Naive thymus-derived CD4-positive, alpha-beta T cell (primary cell): ENCODE measurements at regions of chr2 and their contacts with region 1.

Region 1: DNA sequence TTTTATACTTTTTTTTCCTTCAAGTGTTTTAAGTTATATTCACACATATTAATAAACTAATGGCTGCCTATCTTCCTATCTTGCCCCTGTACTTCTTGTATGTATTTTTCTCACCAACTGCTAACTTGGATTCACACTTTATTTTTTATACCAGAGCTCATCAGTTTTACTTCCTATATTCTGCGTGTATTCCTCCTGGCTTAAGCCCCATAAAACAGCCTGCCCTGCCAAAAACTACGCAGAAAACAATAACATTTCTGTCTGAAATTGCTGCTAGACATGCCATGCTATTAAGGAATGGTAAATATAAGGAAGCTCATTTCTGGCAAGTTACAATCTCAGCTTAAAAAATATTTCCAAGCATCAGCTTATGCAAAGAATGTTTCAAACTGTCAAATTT is 172.3 kb downstream of the UBE2E3 start:
- DNase-seq: no peak
- ATAC-seq: no peak
- H3K4me3 ChIP-seq: no peak overlapping the region
- H3K4me3 Mint-ChIP-seq: peak overlapping the region in 5 of 10 donors; percentile 10 to 75 (median 16)
- H3K27ac ChIP-seq: peak overlapping the region; percentile 26
- H3K27ac Mint-ChIP-seq: peak overlapping the region in 8 of 9 donors; percentile 8 to 90 (median 55)
- H3K4me1 ChIP-seq: peaks cover 20 to 22% of the 10 kb centered on the region in 2 donors
- H3K4me1 Mint-ChIP-seq: peaks cover 18 to 54% (median 48%) of the 10 kb centered on the region in 7 donors
- H3K27me3 ChIP-seq: no peaks in the 10 kb centered on the region
- H3K27me3 Mint-ChIP-seq: no peaks in the 10 kb centered on the region

Region 2: DNA sequence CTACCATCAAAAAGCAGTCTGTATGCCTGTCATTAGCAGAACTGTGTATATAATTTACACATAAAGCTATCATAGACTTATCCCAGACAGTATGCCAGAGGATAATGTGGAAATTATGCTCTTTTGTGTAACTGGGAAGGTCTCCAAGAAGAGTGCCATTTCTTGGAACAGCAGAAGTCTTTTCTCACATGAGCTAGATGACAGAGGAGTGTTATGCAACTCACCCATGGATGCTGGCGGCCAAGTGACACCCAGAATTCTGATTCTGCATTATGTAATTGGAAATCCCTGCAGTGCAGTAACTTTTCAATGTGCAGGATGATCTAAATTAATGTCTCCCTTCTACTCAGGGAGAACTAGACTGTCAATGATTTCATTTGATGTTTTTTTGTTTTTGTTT is 12.3 kb before region 1 on chr2:
- CTCF ChIA-PET with region 1: interaction called, 5 read pairs
- POLR2A ChIA-PET with region 1: interaction called, 7 read pairs
- intact Hi-C with region 1: loop called (anchors 1 kb)
- DNase-seq: peak in 1 of 9 donors; percentile 29
- ATAC-seq: peak; percentile 30
- H3K4me3 ChIP-seq: peak overlapping the region; percentile 20
- H3K4me3 Mint-ChIP-seq: peak overlapping the region; percentile 31 to 94 (median 86)
- H3K27ac ChIP-seq: peak overlapping the region; percentile 78
- H3K27ac Mint-ChIP-seq: peak overlapping the region; percentile 93 to 100 (median 98)
- H3K4me1 ChIP-seq: peaks cover 46 to 66% of the 10 kb centered on the region in 2 donors
- H3K4me1 Mint-ChIP-seq: peaks cover 33 to 83% (median 75%) of the 10 kb centered on the region in 7 donors
- H3K27me3 ChIP-seq: no peaks in the 10 kb centered on the region
- H3K27me3 Mint-ChIP-seq: no peaks in the 10 kb centered on the region